Activated naive CD4-positive, alpha-beta T cell treated with anti-CD3 and anti-CD28 coated beads for 36 hours (primary cell): ENCODE measurements at regions of chr18 and their contacts with region 1.

Region 1: DNA sequence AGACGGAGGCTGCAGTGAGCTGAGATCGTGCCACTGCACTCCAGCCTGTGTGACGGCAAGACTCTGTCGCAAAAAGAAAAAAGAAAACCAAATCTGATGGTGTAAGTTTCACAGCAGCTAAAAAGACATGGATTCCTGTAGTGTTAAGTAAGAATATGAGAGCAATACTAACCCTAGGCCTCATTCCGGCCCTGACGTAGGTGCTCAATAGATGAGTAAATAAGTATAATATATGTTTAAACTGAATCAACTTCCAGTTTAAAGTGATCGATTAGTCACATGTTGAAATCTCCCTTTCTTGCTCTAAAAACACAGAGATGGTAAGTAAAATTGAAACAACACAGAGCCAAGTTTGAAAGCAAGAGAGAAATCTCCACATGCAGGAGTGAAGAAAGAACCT is 8.0 kb downstream of the ME2 start:
- DNase-seq: no peak
- H3K4me3 Mint-ChIP-seq: no peak overlapping the region
- H3K27ac Mint-ChIP-seq: no peak overlapping the region
- H3K4me1 Mint-ChIP-seq: peaks cover 28% of the 10 kb centered on the region
- H3K27me3 Mint-ChIP-seq: no peaks in the 10 kb centered on the region

Region 2: GRCh38 chr18:50902797-50903196 is 15.9 kb after region 1 on chr18:
- CTCF ChIA-PET with region 1: interaction called, 3 read pairs
- intact Hi-C with region 1: loop called (anchors 2 kb)
- DNase-seq: no peak
- H3K4me3 Mint-ChIP-seq: no peak overlapping the region
- H3K27ac Mint-ChIP-seq: no peak overlapping the region
- H3K4me1 Mint-ChIP-seq: peaks cover 35% of the 10 kb centered on the region
- H3K27me3 Mint-ChIP-seq: no peaks in the 10 kb centered on the region

Region 3: GRCh38 chr18:51884039-51884438 is 997.1 kb after region 1 on chr18:
- CTCF ChIA-PET with region 1: no interaction called
- intact Hi-C with region 1: no loop called
- DNase-seq: no peak
- H3K4me3 Mint-ChIP-seq: no peak overlapping the region
- H3K27ac Mint-ChIP-seq: no peak overlapping the region
- H3K4me1 Mint-ChIP-seq: no peaks in the 10 kb centered on the region
- H3K27me3 Mint-ChIP-seq: no peaks in the 10 kb centered on the region